ENCODE measurements at regions of chr1 and their contacts with region 1.

Region 1: GRCh38 chr1:15214527-15214926 is 32.5 kb upstream of the FHAD1 start:
- DNase-seq: peak; percentile 55
- ATAC-seq: 0 out of 2 replicates have a peak, but pooled peaks have one; percentile 42
- H3K4me3 ChIP-seq: no peak overlapping the region
- H3K27ac ChIP-seq: peak overlapping the region; percentile 81
- H3K4me1 ChIP-seq: peaks cover 26% of the 10 kb centered on the region
- H3K27me3 ChIP-seq: no peaks in the 10 kb centered on the region
- CTCF ChIP-seq: no peak
- POLR2A ChIP-seq: no peak
- RAD21 ChIP-seq: no peak

Region 2: DNA sequence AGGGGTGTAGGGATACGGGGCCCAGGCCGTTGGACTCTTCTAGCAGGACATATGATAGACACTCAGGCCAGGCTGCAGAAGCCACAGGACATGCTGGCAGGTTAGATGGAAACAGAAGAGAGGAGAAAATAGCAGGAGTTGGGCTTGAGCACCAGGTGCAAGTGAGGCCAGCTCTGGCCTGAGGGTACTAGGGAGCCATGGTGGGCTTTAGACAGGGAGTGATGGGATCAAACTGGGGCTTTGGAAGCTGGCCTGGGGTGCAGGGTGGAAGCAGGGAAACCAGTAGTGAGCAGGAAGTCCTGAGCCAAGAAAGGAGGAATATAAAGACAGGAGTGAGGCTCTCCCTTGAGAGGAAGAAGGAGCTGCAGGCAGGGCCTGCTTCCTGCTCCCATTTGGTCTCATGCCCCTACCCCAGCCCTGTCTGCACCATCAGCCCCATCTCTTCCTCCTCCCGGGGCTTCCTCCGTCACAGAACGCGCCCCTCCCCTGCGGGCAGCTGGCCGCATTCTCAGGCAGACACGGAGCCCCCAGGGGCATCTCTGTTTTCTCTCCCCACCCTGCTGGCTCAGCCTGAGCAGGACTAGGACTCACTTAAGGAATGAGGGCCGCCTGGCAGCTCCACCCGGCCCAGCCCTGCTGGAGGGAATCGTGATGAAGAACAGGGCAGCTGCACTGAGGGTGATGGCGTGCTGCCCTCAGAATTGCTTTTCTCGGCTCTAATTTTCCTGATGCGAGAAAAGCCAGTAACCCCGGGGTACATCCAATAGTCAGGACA is 226.5 kb before region 1 on chr1:
- CTCF ChIA-PET with region 1: no interaction called
- POLR2A ChIA-PET with region 1: no interaction called
- dilution Hi-C with region 1: no loop called
- in situ Hi-C with region 1: no loop called
- intact Hi-C with region 1: no loop called
- DNase-seq: no peak
- ATAC-seq: no peak; the same call in 1 of the 2 replicates
- H3K4me3 ChIP-seq: no peak overlapping the region
- H3K27ac ChIP-seq: no peak overlapping the region
- H3K4me1 ChIP-seq: no peaks in the 10 kb centered on the region
- H3K27me3 ChIP-seq: no peaks in the 10 kb centered on the region
- CTCF ChIP-seq: no peak
- POLR2A ChIP-seq: no peak
- RAD21 ChIP-seq: no peak

Region 3: DNA sequence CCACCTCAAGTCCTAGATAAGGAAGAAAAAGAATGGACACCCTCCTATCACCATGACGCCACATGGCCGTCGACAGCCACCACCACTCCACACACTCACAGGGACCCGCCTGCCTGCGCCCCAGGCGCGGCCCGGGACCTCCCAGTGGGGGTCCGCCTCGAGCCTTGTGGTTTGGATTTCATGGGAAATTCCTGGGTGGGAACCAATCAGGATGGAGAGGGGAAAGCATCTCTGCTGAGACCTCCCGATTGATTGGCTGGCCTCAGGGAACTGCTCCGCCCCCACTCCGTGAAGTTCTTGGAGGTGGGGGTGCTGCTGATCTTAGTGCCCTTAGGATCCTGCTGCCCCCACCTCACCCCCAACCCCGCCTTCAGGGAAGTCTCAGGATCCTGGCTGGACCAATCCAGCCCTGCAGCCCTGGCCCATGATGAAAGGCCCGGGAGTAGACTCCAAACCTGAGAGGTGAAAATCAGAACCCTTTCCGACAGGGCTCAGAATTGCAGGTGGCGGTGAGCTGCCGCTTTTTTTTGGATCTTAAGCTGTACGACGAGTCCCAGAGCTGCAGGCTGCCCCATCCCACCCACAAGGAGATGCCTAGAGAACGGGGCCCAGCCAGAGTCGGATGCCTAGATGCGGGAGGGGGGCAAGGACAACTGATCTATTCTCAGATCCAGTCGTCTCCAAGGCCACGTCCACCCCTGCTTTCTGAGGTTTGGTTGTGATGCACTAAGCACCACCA is 90.0 kb before region 1 on chr1:
- CTCF ChIA-PET with region 1: no interaction called
- POLR2A ChIA-PET with region 1: no interaction called
- dilution Hi-C with region 1: no loop called
- in situ Hi-C with region 1: no loop called
- intact Hi-C with region 1: no loop called
- DNase-seq: no peak
- ATAC-seq: no peak
- H3K4me3 ChIP-seq: no peak overlapping the region
- H3K27ac ChIP-seq: no peak overlapping the region
- H3K4me1 ChIP-seq: no peaks in the 10 kb centered on the region
- H3K27me3 ChIP-seq: peaks cover 26% of the 10 kb centered on the region
- CTCF ChIP-seq: no peak
- POLR2A ChIP-seq: no peak
- RAD21 ChIP-seq: no peak

Region 4: DNA sequence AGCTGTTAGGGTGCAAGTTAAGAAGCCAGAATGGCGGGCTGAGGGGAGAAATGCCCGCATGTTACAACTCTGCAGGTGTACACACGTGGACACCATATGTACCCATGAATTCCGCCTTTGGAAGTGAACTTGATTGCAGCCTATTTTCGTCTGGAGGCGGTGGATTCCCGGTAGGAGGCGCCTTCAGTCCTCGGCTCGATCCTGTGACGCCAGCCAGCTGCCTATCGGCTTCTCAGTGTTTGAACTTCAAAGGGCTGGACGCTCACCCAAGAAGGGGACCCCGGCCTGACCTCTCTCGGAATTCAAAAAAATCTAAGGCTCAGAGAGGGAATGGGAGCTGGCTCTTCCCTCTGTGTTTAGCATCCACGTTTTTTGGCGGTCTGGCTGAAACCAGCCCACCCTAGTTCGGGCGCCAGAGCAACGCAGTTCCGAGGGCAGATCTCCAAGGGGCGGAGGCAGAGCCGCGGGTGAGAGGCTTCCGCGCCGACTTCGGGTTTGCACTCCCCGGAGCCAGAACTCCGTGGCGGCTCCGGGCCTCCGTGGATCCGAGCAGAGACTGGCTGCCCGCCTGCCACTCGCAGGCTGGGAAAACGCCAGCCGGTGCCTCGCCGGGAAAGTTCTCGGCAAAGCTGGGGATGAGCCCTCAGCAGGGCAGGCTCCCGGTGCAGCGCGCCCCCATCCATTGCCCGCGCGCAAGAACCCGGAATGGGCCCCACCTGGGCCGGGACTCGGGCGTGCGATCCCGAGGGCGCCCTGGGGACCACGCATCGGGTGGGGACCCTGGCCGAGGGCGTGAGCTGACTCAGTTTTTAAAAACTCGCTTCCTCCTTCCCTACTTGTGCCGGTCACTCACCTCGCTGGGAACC is 62.0 kb before region 1 on chr1:
- CTCF ChIA-PET with region 1: interaction called, 7 read pairs
- POLR2A ChIA-PET with region 1: no interaction called
- dilution Hi-C with region 1: no loop called
- in situ Hi-C with region 1: no loop called
- intact Hi-C with region 1: loop called (anchors 2 kb)
- DNase-seq: peak; percentile 91
- ATAC-seq: peak; percentile 56
- H3K4me3 ChIP-seq: peak overlapping the region; percentile 80
- H3K27ac ChIP-seq: peak overlapping the region; percentile 64
- H3K4me1 ChIP-seq: peaks cover 19% of the 10 kb centered on the region
- H3K27me3 ChIP-seq: 0 out of 2 replicates have a peak, but pooled peaks cover 3% of the 10 kb centered on the region
- CTCF ChIP-seq: peak; percentile 85
- POLR2A ChIP-seq: peak; percentile 36; the same call in 1 of the 2 replicates
- RAD21 ChIP-seq: peak; percentile 83

Region 5: GRCh38 chr1:15246960-15247614 is 32.6 kb after region 1 on chr1 and contains the start of gene FHAD1:
- CTCF ChIA-PET with region 1: no interaction called
- POLR2A ChIA-PET with region 1: no interaction called
- dilution Hi-C with region 1: no loop called
- in situ Hi-C with region 1: no loop called
- intact Hi-C with region 1: loop called (anchors 5 kb)
- DNase-seq: peak; percentile 17
- ATAC-seq: peak; percentile 70
- H3K4me3 ChIP-seq: peak within 1 kb of the TSS; percentile 35
- H3K27ac ChIP-seq: peak within 1 kb of the TSS; percentile 27; the same call in 1 of the 2 replicates
- H3K4me1 ChIP-seq: peaks cover 8% of the 10 kb centered on the region; the same call in 1 of the 2 replicates
- H3K27me3 ChIP-seq: peaks cover 21% of the 10 kb centered on the region
- CTCF ChIP-seq: no peak
- POLR2A ChIP-seq: no peak
- RAD21 ChIP-seq: no peak
- total RNA-seq, gene FHAD1: not detected in 2 replicates

Measured in IMR-90 (cell line).